GM12878 (cell line): ENCODE measurements at regions of chr11 and their contacts with region 1.

Region 1: GRCh38 chr11:65802841-65803240 is 16.0 kb downstream of the OVOL1 start:
- DNase-seq: peak; percentile 71
- ATAC-seq: peak; percentile 99
- H3K4me3 ChIP-seq: no peak overlapping the region
- H3K27ac ChIP-seq: no peak overlapping the region
- H3K4me1 ChIP-seq: peaks cover 15% of the 10 kb centered on the region
- H3K27me3 ChIP-seq: no peaks in the 10 kb centered on the region
- CTCF ChIP-seq: no peak
- EP300 ChIP-seq: 0 out of 4 replicates have a peak, but pooled peaks of 1 of the 2 experiments have one; percentile 44
- POLR2A ChIP-seq: peak; percentile 38; the same call in 1 of the 2 replicates
- RAD21 ChIP-seq: no peak

Region 2: DNA sequence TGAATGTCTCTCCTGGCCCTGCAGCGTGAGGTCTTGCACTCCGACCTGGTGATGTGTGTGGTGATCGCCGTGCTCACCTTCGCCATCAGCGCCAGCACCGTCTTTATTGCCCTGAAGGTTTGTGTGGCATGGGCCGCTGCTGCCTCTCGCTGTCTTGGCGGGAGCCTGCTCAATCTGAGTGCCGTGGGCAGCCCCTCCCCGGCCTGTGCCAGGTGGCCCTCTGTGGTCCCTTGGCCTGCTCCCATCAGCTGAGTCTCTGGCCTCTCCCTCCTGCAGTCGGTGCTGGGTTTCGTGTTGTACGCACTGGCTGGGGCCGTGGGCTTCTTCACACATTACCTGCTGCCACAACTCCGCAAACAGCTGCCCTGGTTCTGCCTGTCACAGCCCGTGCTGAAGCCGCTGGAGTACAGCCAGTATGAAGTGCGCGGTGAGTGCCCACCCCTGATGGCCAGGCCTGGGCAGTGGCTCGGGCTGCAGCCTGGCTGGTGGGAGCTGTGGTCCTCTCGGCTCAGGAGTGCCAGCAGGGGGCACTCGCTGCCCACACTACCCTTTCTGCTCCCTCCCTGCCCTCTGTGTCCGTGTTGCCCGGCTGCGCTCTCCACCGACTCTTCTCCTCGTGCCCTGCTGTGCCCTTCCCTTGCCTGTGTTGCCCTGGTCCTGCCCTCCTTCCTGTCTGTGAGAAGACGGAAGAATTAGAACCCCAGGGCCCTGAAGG is 177.1 kb before region 1 on chr11:
- CTCF ChIA-PET with region 1: no interaction called
- POLR2A ChIA-PET with region 1: no interaction called
- RAD21 ChIA-PET with region 1: no interaction called
- SMC1A ChIA-PET with region 1: no interaction called
- in situ Hi-C with region 1: no loop called
- intact Hi-C with region 1: no loop called
- DNase-seq: no peak
- ATAC-seq: peak; percentile 96
- H3K4me3 ChIP-seq: no peak overlapping the region
- H3K27ac ChIP-seq: no peak overlapping the region
- H3K4me1 ChIP-seq: no peaks in the 10 kb centered on the region
- H3K27me3 ChIP-seq: no peaks in the 10 kb centered on the region
- CTCF ChIP-seq: peak; percentile 60 to 87 (median 85)
- EP300 ChIP-seq: no peak
- POLR2A ChIP-seq: no peak
- RAD21 ChIP-seq: peak; percentile 39

Region 3: GRCh38 chr11:65736810-65737209 is 66.0 kb before region 1 on chr11:
- CTCF ChIA-PET with region 1: no interaction called
- POLR2A ChIA-PET with region 1: no interaction called
- RAD21 ChIA-PET with region 1: no interaction called
- SMC1A ChIA-PET with region 1: no interaction called
- in situ Hi-C with region 1: no loop called
- intact Hi-C with region 1: no loop called
- DNase-seq: no peak
- ATAC-seq: no peak
- H3K4me3 ChIP-seq: no peak overlapping the region
- H3K27ac ChIP-seq: no peak overlapping the region
- H3K4me1 ChIP-seq: no peaks in the 10 kb centered on the region
- H3K27me3 ChIP-seq: peaks cover 0 to 3% of the 10 kb centered on the region in 2 experiments; a peak in 2 of 4 replicates
- CTCF ChIP-seq: no peak
- EP300 ChIP-seq: no peak
- POLR2A ChIP-seq: no peak
- RAD21 ChIP-seq: no peak

Region 4: GRCh38 chr11:65791691-65792213 is 11.1 kb before region 1 on chr11:
- CTCF ChIA-PET with region 1: interaction called, 13 read pairs
- POLR2A ChIA-PET with region 1: interaction called, 27 read pairs
- RAD21 ChIA-PET with region 1: interaction called, 9 read pairs
- SMC1A ChIA-PET with region 1: interaction called, 11 read pairs
- in situ Hi-C with region 1: no loop called
- intact Hi-C with region 1: no loop called
- DNase-seq: peak; percentile 73
- ATAC-seq: peak; percentile 99
- H3K4me3 ChIP-seq: no peak overlapping the region
- H3K27ac ChIP-seq: peak overlapping the region; percentile 54
- H3K4me1 ChIP-seq: peaks cover 30% of the 10 kb centered on the region
- H3K27me3 ChIP-seq: peaks cover 5 to 8% of the 10 kb centered on the region in 2 experiments; a peak in 2 of 4 replicates
- CTCF ChIP-seq: peak in 1 of 3 experiments; percentile 10; a peak in 1 of 6 replicates
- EP300 ChIP-seq: peak; percentile 21 to 49; a peak in 3 of 4 replicates
- POLR2A ChIP-seq: peak; percentile 93
- RAD21 ChIP-seq: no peak